HEK293 (cell line): ENCODE measurements at regions of chr1 and their contacts with region 1.

Region 1: DNA sequence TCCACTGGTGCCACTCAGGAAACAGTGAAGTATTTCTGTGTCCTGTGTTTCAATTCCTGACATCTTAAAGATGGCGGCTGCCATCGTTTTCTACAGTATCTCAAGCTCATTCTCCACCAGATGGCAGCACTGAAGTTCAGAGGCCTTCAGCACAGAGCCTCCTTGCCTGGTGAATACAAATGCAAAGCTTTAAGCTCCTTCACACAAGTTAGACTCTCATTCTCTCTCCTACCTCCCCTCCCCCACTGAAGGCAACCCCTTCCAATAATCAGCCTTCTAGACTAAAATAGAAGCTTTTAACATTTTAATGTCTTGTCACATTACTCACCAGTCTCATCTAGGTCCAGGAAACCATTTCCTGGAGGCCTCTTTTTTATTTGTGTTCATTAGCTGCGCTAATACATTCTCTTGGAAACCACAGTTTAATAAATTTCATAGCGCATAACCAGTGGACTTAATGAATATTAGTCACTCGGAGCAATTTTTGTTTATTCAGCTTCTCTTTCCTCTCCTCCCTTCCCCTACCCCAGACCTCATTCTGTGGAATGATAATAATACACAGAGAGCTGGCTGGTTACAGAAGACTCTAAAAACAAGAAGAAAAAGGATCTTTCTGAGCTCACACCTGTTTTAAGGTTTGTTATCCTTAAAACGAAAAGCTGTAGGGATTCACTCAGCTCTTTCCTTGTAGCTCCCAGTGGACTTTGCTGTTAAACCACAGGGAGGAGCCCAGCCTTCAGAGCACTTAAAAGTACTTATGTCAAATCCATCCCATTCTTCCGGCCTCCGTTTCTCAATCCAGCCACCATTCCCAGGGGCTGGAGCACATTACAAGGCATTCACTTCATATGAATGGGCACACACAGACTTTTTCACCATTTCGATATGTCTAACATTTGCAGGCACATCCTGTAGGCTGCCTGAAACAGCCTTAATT is 384.9 kb downstream of the HLX start:
- H3K4me3 ChIP-seq: no peak overlapping the region
- H3K27ac ChIP-seq: no peak overlapping the region
- H3K4me1 ChIP-seq: peaks cover 3% of the 10 kb centered on the region
- CTCF ChIP-seq: peak; percentile 46; the same call in 1 of the 2 replicates

Region 2: GRCh38 chr1:221045842-221046831 is 218.0 kb before region 1 on chr1:
- CTCF ChIA-PET with region 1: no interaction called
- POLR2A ChIA-PET with region 1: no interaction called
- H3K4me3 ChIP-seq: no peak overlapping the region
- H3K27ac ChIP-seq: no peak overlapping the region
- H3K4me1 ChIP-seq: no peaks in the 10 kb centered on the region
- CTCF ChIP-seq: no peak

Region 3: GRCh38 chr1:221239181-221239580 is 24.9 kb before region 1 on chr1:
- CTCF ChIA-PET with region 1: no interaction called
- POLR2A ChIA-PET with region 1: no interaction called
- H3K4me3 ChIP-seq: no peak overlapping the region
- H3K27ac ChIP-seq: no peak overlapping the region
- H3K4me1 ChIP-seq: no peaks in the 10 kb centered on the region; the same call in 1 of the 2 replicates
- CTCF ChIP-seq: no peak

Region 4: GRCh38 chr1:221251580-221251979 is 12.5 kb before region 1 on chr1:
- CTCF ChIA-PET with region 1: interaction called, 10 read pairs
- POLR2A ChIA-PET with region 1: no interaction called
- H3K4me3 ChIP-seq: no peak overlapping the region
- H3K27ac ChIP-seq: no peak overlapping the region
- H3K4me1 ChIP-seq: no peaks in the 10 kb centered on the region
- CTCF ChIP-seq: no peak

Region 5: GRCh38 chr1:221415626-221416025 is 151.5 kb after region 1 on chr1:
- CTCF ChIA-PET with region 1: interaction called, 10 read pairs
- POLR2A ChIA-PET with region 1: no interaction called
- H3K4me3 ChIP-seq: no peak overlapping the region
- H3K27ac ChIP-seq: no peak overlapping the region
- H3K4me1 ChIP-seq: no peaks in the 10 kb centered on the region
- CTCF ChIP-seq: no peak

Region 6: DNA sequence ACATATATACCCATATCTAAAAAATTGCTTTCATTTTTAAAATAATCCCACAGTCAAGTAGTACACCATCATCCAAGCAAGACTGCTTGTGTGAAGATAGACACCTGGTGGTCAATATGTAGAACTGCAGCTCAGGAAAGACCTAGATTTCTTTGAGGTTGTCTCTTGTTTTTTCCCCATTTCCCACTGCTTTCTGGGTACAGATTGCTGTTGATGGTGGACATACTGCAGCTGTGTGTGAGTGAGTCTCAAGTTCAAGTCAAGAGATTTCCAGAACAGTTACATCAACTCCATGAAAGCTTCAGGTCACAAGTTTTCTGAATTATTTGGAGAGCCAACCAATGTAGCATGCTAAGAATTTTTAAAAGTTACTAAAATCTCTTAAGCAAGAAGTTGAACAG is 171.4 kb after region 1 on chr1:
- CTCF ChIA-PET with region 1: interaction called, 115 read pairs
- POLR2A ChIA-PET with region 1: interaction called, 3 read pairs
- H3K4me3 ChIP-seq: no peak overlapping the region
- H3K27ac ChIP-seq: no peak overlapping the region
- H3K4me1 ChIP-seq: no peaks in the 10 kb centered on the region
- CTCF ChIP-seq: peak; percentile 47; the same call in 1 of the 2 replicates